Ascending aorta (tissue), 2 donors: ENCODE measurements at regions of chr12 and their contacts with region 1.

Region 1: GRCh38 chr12:107093417-107094182 is at the start of gene CRY1:
- DNase-seq: peak; percentile 83 to 97
- H3K4me3 ChIP-seq: peak within 1 kb of the TSS; percentile 87 to 95
- H3K27ac ChIP-seq: peak within 1 kb of the TSS; percentile 99
- H3K4me1 ChIP-seq: peaks cover 0 to 9% of the 10 kb centered on the region in 2 donors
- H3K27me3 ChIP-seq: no peaks in the 10 kb centered on the region
- CTCF ChIP-seq: no peak
- total RNA-seq, gene CRY1: 23.0 TPM

Region 2: GRCh38 chr12:106357549-106358395 is 735.8 kb before region 1 on chr12 and contains the start of gene POLR3B:
- intact Hi-C with region 1: loop called (anchors 2 kb)
- DNase-seq: peak; percentile 83 to 98
- H3K4me3 ChIP-seq: peak within 1 kb of the TSS; percentile 70 to 83
- H3K27ac ChIP-seq: peak within 1 kb of the TSS; percentile 84 to 90
- H3K4me1 ChIP-seq: peaks cover 11 to 12% of the 10 kb centered on the region in 2 donors
- H3K27me3 ChIP-seq: no peaks in the 10 kb centered on the region
- CTCF ChIP-seq: peak; percentile 72 to 86 (median 83)
- total RNA-seq, gene POLR3B: 0.21 TPM

Region 3: GRCh38 chr12:106955377-106956047 is 138.1 kb before region 1 on chr12 and contains the start of gene TMEM263:
- intact Hi-C with region 1: loop called (anchors 1 kb)
- DNase-seq: peak; percentile 72 to 96
- H3K4me3 ChIP-seq: peak within 1 kb of the TSS; percentile 85 to 99
- H3K27ac ChIP-seq: peak within 1 kb of the TSS; percentile 99
- H3K4me1 ChIP-seq: peaks cover 0 to 20% of the 10 kb centered on the region in 2 donors
- H3K27me3 ChIP-seq: no peaks in the 10 kb centered on the region
- CTCF ChIP-seq: peak in 1 of 3 experiments; percentile 40
- total RNA-seq, gene TMEM263: 27.0 TPM

Region 4: DNA sequence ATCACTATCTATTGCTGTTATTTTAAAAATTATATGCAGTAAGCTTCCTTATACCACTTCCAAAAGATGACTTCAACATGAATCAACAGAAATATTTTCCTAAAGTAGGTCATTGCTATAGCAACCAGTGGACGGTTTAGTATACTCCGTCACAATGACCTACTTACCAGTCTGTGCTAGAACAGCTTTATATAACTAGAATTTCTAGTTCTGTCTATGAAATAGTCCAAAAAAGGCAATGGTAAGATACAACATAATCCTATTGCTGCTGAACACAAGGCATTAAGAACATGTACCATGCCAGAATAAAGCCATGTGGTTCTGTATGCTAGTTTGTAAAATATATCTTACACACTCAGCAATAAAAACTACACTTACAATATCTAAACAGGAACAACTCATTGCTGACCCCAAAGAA is 66.0 kb before region 1 on chr12:
- intact Hi-C with region 1: loop called (anchors 2 kb)
- DNase-seq: no peak
- H3K4me3 ChIP-seq: no peak overlapping the region
- H3K27ac ChIP-seq: peak overlapping the region; percentile 54 to 74
- H3K4me1 ChIP-seq: peaks cover 0 to 20% of the 10 kb centered on the region in 2 donors
- H3K27me3 ChIP-seq: no peaks in the 10 kb centered on the region
- CTCF ChIP-seq: no peak

Region 5: GRCh38 chr12:107200394-107200793 is 106.8 kb after region 1 on chr12:
- intact Hi-C with region 1: no loop called
- DNase-seq: no peak
- H3K4me3 ChIP-seq: no peak overlapping the region
- H3K27ac ChIP-seq: no peak overlapping the region
- H3K4me1 ChIP-seq: no peaks in the 10 kb centered on the region
- H3K27me3 ChIP-seq: no peaks in the 10 kb centered on the region
- CTCF ChIP-seq: no peak

Region 6: GRCh38 chr12:107760809-107761501 is 667.4 kb after region 1 on chr12 and contains the start of gene PRDM4:
- intact Hi-C with region 1: loop called (anchors 2 kb)
- DNase-seq: peak; percentile 85 to 98
- H3K4me3 ChIP-seq: peak within 1 kb of the TSS; percentile 71 to 92
- H3K27ac ChIP-seq: peak within 1 kb of the TSS; percentile 57 to 65
- H3K4me1 ChIP-seq: peaks cover 0 to 22% of the 10 kb centered on the region in 2 donors
- H3K27me3 ChIP-seq: no peaks in the 10 kb centered on the region
- CTCF ChIP-seq: peak in 1 of 3 experiments; percentile 39
- total RNA-seq, gene PRDM4: 7.3 TPM